Activated CD8-positive, alpha-beta T cell treated with anti-CD3 and anti-CD28 coated beads, Interleukin-2, amount 10 ng/mL, durations not matched to agents 7 days and 5 days (primary cell): ENCODE measurements at regions of chr1 and their contacts with region 1.

Region 1: DNA sequence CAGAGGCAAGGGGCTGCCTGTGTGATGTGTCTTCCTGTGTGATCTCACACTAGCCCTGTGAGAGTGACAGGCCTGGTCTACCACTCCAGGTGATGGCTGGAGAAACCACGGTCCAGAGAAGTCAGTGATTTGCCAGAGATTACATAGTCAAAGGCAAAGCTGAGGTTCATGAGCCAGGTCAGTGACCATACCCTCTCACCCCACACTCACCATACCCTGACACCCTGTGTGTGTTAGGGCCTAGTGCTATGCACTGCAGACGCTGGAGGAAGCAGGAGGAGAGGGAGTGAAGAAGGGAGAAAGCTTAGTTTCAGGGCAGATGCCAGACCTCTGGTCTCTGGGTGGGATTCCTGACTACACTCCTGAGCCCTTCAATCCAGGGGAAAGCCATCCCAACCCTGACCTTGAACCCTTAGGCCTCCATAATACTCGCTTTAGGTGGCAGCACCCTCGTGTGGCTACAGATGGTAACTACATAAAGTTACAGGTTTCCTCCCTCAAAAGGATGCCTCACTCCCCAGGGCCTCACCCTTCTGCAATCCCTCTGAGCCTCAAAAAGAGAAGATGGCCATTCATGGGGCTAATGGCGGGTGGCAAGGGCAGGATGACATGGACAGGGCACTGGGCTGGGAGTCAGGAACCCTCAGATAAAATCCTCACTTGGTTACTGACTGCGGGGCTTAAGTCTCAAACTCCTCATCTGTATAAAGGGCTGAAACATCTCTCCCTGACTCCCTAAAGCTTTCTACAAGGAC is 20.8 kb upstream of the SDC3 start:
- DNase-seq: peak; percentile 68
- ATAC-seq: peak; percentile 76
- H3K4me3 Mint-ChIP-seq: no peak overlapping the region
- H3K27ac Mint-ChIP-seq: peak overlapping the region; percentile 55
- H3K4me1 Mint-ChIP-seq: peaks cover 8% of the 10 kb centered on the region
- H3K27me3 Mint-ChIP-seq: no peaks in the 10 kb centered on the region

Region 2: GRCh38 chr1:30919025-30919881 is 10.1 kb before region 1 on chr1:
- CTCF ChIA-PET with region 1: interaction called, 19 read pairs
- POLR2A ChIA-PET with region 1: interaction called, 3 read pairs
- DNase-seq: no peak
- ATAC-seq: no peak
- H3K4me3 Mint-ChIP-seq: no peak overlapping the region
- H3K27ac Mint-ChIP-seq: no peak overlapping the region
- H3K4me1 Mint-ChIP-seq: peaks cover 3% of the 10 kb centered on the region
- H3K27me3 Mint-ChIP-seq: peaks cover 22% of the 10 kb centered on the region

Region 3: DNA sequence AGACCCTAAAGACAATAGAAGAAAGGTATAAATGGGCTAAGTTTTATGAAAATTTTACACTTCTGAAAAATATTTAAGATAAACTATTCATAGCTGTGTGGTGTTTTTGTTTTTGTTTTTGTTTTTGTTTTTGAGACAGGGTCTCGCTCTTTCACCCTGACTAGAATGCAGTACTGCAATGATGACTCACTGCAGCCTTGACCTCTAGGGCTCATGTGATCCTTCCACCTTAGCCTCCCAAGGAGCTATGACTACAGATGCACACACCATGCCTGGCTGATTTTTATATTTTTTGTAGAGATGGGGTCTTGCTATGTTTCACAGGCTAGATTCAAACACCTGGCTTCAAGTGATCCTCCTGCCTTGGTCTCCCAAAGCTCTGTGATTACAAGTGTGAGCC is 69.6 kb after region 1 on chr1:
- CTCF ChIA-PET with region 1: no interaction called
- POLR2A ChIA-PET with region 1: no interaction called
- DNase-seq: no peak
- ATAC-seq: no peak
- H3K4me3 Mint-ChIP-seq: no peak overlapping the region
- H3K27ac Mint-ChIP-seq: no peak overlapping the region
- H3K4me1 Mint-ChIP-seq: peaks cover 7% of the 10 kb centered on the region
- H3K27me3 Mint-ChIP-seq: no peaks in the 10 kb centered on the region